Endothelial cell of umbilical vein (primary cell): ENCODE measurements at regions of chr22 and their contacts with region 1.

Region 1: GRCh38 chr22:27420817-27421361 is 380.7 kb downstream of the MN1 start:
- DNase-seq: peak; percentile 98
- H3K4me3 ChIP-seq: no peak overlapping the region
- H3K27ac ChIP-seq: peak overlapping the region; percentile 97
- H3K4me1 ChIP-seq: peaks cover 43% of the 10 kb centered on the region
- H3K27me3 ChIP-seq: peaks cover 0 to 2% of the 10 kb centered on the region in 2 experiments
- CTCF ChIP-seq: no peak
- POLR2A ChIP-seq: peak; percentile 38

Region 2: DNA sequence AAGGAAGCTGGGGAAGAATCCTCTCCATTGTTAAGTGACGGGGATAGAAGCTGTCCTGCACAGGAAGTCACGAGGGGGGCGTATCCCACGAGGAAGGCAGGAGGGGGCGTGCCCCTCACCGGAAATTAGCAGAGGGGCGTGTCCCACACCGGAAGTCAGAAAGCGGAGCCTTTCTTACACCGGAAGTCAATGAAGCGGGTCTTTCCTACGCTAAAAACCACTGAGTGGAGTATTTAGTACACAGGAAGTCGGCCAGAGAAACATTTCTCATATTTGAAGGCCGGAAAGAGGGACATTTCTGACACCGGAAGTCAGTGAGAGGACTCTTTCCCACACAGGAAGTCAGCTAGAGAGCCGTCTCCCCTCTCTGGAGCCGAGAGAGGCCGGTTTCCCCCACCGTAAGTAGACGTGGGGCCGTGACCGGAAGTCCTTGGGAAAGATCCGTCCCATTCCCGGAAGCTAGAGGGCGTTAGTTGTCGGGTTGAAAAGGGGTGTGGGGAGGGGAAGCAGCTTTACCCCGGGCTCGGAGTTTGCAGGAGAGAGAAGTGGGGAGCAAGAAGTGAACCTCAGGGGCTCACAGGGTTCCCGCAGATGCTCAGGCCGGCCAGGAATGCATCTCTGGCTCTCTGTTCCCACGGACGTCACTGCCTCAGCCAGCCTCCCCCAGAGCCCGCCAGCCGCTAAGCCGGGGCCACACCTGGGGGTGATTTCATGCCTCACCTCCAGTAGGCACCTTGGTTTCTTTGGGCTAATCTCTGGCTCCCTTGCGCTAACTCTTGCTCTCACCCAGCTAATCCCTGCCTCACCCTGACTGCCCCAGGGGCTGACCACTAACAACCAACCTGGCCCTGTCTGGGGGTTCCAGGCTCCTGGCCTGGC is 748.1 kb before region 1 on chr22:
- CTCF ChIA-PET with region 1: no interaction called
- POLR2A ChIA-PET with region 1: no interaction called
- dilution Hi-C with region 1: no loop called
- intact Hi-C with region 1: loop called (anchors 10 kb)
- DNase-seq: peak; percentile 76
- H3K4me3 ChIP-seq: peak overlapping the region; percentile 52 to 76 (median 56)
- H3K27ac ChIP-seq: peak overlapping the region; percentile 93
- H3K4me1 ChIP-seq: peaks cover 21% of the 10 kb centered on the region
- H3K27me3 ChIP-seq: no peaks in the 10 kb centered on the region
- CTCF ChIP-seq: peak; percentile 23 to 29
- POLR2A ChIP-seq: peak; percentile 82

Region 3: DNA sequence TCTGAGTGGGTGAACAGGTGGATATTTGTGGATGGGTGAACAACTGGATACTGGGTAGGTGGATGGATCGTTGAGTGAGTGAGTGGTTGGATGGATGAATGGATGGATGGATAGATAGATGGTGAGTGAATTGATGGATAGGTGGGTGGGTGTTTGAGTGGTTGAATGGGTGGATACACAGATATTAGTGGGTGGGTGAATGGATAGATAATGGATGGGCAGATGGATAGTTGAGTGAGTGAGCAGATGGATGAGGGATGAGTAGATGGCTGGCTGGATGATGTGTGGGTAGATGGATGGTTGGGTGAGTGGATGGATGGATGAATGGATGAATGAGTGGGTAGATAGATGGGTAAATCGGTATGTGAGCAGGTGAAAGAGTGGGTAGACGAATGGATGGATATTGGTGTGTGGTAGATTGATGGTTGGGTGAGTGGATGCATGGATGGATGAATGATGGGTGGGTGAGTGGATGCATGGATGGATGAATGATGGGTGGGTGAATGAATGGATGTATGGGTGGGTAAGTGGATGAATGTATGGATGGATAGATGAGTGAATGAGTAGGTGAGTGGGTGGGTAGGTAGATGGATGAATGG is 26.0 kb before region 1 on chr22:
- CTCF ChIA-PET with region 1: no interaction called
- POLR2A ChIA-PET with region 1: no interaction called
- dilution Hi-C with region 1: no loop called
- intact Hi-C with region 1: no loop called
- DNase-seq: no peak
- H3K4me3 ChIP-seq: no peak overlapping the region
- H3K27ac ChIP-seq: no peak overlapping the region
- H3K4me1 ChIP-seq: no peaks in the 10 kb centered on the region
- H3K27me3 ChIP-seq: peaks cover 4 to 11% of the 10 kb centered on the region in 2 experiments
- CTCF ChIP-seq: no peak
- POLR2A ChIP-seq: no peak

Region 4: DNA sequence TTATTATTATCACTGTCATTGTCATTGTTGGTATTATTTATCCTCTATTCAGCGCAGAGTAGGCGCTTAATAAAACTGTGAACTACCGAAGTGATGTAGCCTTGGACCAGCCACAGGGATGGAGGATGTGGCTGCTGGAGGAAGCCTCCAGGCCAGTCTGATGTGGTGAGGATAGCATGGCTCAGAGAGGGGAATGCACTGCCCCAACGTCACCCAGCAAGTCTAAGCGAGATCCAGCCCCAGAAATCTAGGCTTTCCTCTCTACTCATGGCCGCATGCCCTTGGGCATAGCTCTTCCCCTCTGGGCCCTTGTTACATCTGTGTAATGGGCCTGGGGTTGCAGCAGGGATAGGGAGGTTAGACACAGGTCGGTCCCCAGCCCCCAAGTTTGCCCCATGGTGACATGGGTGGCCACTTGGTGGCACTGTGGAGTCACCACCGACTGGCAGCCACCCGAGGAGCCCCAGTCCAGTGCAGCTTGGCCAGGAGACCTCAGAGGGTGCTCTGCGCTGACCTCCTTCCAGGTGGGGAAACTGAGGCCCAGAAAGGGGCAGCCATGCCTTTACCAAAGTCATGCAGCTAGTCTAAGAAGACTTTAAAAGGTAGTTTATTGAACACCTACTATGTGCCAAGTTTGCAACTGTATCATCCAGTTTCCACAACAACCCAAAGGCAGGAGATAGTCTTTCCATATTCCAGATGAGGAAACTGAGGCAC is 15.1 kb before region 1 on chr22:
- CTCF ChIA-PET with region 1: interaction called, 16 read pairs
- POLR2A ChIA-PET with region 1: no interaction called
- dilution Hi-C with region 1: no loop called
- intact Hi-C with region 1: no loop called
- DNase-seq: peak; percentile 43
- H3K4me3 ChIP-seq: no peak overlapping the region
- H3K27ac ChIP-seq: no peak overlapping the region
- H3K4me1 ChIP-seq: no peaks in the 10 kb centered on the region
- H3K27me3 ChIP-seq: peaks cover 0 to under 1% of the 10 kb centered on the region in 2 experiments
- CTCF ChIP-seq: peak; percentile 81 to 85
- POLR2A ChIP-seq: no peak

Region 5: DNA sequence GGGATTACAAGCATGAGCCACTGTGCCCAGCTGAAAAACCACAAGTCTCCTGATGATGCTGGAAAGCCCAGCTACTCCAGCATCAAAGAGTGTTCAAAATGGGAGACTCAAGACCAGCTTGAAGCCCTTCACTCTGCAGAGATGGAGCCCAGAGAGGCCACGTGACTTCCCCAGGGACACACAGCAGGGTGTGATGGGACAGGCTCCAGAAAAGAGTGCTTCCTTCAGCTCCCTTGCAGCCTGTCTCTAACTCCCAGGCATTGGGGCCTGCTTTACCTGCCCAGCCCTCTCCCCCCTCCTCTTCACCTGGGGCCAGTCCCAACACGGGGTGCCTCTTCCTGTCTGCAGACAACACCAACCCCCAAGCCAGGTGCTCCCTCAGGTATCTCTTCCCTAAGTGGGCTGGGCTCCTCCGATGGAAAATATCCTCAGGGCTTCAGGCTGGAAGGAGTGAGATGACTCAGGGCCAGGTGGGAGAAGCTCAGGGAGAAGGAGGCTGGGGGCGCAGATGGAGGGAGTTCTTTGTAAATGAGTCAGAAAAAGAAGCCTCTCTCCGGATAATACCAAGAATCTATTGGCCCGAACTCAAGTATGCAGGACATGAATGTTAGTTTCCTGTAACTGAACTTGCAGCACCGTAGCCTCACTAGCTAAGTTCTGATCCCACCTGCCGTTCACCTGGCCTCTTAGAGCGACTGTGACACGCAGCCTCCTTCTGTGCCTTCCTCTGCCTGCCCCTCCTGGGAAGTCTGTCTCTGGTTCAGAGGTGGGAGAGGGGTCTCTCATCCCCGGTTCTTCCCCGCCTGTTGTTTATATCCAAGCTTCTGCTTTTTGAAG is 54.0 kb after region 1 on chr22:
- CTCF ChIA-PET with region 1: interaction called, 8 read pairs
- POLR2A ChIA-PET with region 1: no interaction called
- dilution Hi-C with region 1: no loop called
- intact Hi-C with region 1: loop called (anchors 1 kb)
- DNase-seq: peak; percentile 76
- H3K4me3 ChIP-seq: peak overlapping the region in 1 of 3 experiments; percentile 11
- H3K27ac ChIP-seq: peak overlapping the region; percentile 13
- H3K4me1 ChIP-seq: peaks cover 22% of the 10 kb centered on the region
- H3K27me3 ChIP-seq: peaks cover 0 to 2% of the 10 kb centered on the region in 2 experiments
- CTCF ChIP-seq: no peak
- POLR2A ChIP-seq: no peak

Region 6: GRCh38 chr22:27512283-27512761 is 91.4 kb after region 1 on chr22:
- CTCF ChIA-PET with region 1: no interaction called
- POLR2A ChIA-PET with region 1: interaction called, 3 read pairs
- dilution Hi-C with region 1: no loop called
- intact Hi-C with region 1: loop called (anchors 1 kb)
- DNase-seq: peak; percentile 99
- H3K4me3 ChIP-seq: no peak overlapping the region
- H3K27ac ChIP-seq: peak overlapping the region; percentile 83
- H3K4me1 ChIP-seq: peaks cover 29% of the 10 kb centered on the region
- H3K27me3 ChIP-seq: no peaks in the 10 kb centered on the region
- CTCF ChIP-seq: no peak
- POLR2A ChIP-seq: no peak

Region 7: DNA sequence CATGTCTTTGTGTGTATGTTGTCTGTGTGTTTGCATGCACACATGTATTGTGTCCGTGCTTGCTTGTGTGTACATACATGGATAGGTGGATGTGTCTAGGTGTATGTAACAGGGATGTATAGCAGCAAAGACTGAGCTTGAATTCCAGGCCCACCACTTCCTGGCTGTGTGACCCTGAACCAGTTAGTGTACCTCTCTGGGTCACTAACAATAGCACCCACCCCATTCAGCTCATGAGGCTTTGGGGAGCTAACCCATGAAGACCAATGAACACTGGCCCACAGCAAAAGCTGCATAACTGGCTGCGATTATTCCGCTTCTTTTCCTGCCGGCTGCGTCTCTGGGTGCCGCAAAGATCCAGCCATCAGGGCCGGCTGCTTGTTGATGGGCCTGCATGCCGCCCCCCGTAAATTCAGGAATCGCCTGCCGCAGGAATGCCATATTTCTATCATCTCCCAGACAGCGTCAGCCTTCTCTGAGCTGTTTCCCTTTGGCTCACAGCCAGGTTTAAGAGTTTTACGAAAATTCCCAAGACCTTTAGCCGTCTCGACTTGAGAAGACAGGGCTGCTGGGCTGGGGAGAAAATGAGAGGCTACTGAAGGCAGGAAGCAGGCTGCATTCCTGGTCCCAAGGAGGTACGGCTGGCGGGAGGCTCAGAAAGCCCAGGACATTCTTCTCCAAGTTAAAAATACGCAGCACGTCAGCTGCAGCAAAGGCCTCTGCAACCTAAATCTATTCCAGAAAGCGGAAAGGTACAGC is 156.1 kb after region 1 on chr22:
- CTCF ChIA-PET with region 1: interaction called, 3 read pairs
- POLR2A ChIA-PET with region 1: no interaction called
- dilution Hi-C with region 1: no loop called
- intact Hi-C with region 1: loop called (anchors 1 kb)
- DNase-seq: peak; percentile 96
- H3K4me3 ChIP-seq: no peak overlapping the region
- H3K27ac ChIP-seq: peak overlapping the region; percentile 68
- H3K4me1 ChIP-seq: peaks cover 13% of the 10 kb centered on the region
- H3K27me3 ChIP-seq: no peaks in the 10 kb centered on the region
- CTCF ChIP-seq: no peak
- POLR2A ChIP-seq: no peak